ENCODE measurements at regions of chr9 and their contacts with region 1.

Region 1: DNA sequence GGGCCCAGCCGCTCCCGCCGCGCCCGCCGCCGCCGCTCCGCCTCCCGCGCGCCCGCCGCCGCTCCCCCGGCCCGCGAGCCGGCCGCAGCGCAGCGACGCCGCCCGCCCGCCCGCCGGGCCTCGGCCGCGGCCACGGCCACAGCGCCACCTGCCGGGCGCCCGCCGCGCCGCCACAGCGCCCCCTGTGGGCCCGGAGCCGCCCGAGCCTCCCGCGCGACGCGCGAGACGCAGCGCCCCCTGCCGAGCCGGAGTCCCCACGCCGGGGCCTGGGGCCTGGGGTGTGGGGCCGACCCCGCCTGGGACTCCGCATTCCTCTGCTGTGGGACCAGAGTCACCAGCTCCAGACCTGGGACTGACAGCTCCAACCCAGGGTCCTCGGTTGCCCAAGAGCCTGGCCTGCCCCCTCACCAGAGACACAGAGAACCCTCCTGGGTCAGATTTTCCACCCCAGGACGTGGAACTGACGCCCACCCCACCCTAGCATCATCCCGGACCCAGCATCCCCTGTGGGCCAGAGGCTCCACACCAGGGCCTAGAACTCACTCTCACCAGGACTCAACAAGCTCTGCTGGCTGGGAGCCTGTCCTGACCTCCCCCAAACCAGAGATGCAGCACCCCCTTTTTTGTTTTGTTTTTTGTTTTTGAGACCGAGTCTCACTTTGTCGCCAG is at the start of gene RAPGEF1:
- DNase-seq: peak; percentile 80 to 86 (median 84)
- ATAC-seq: peak; percentile 44 to 78 (median 69)
- H3K4me3 ChIP-seq: peak within 1 kb of the TSS; percentile 62 to 66 (median 63)
- H3K27ac ChIP-seq: peak within 1 kb of the TSS; percentile 87 to 99 (median 91)
- H3K4me1 ChIP-seq: peaks cover 0 to 31% (median 19%) of the 10 kb centered on the region in 4 donors
- H3K27me3 ChIP-seq: no peaks in the 10 kb centered on the region
- CTCF ChIP-seq: peak; percentile 72 to 99 (median 82)
- POLR2A ChIP-seq: no peak
- total RNA-seq, gene RAPGEF1: 22.9 to 53.6 (median 30.2) TPM

Region 2: GRCh38 chr9:131590908-131591844 is 148.9 kb before region 1 on chr9:
- intact Hi-C with region 1: loop called (anchors 2 to 5 kb)
- DNase-seq: peak; percentile 84 to 89 (median 85)
- ATAC-seq: peak; percentile 90 to 95 (median 94)
- H3K4me3 ChIP-seq: no peak overlapping the region
- H3K27ac ChIP-seq: no peak overlapping the region
- H3K4me1 ChIP-seq: no peaks in the 10 kb centered on the region
- H3K27me3 ChIP-seq: no peaks in the 10 kb centered on the region
- CTCF ChIP-seq: peak; percentile 83 to 97 (median 88)
- POLR2A ChIP-seq: no peak

Region 3: GRCh38 chr9:131656356-131657036 is 83.6 kb before region 1 on chr9:
- intact Hi-C with region 1: loop called in 1 of 2 experiments (anchors 10 kb)
- DNase-seq: peak; percentile 67 to 84 (median 74)
- ATAC-seq: peak; percentile 41 to 63 (median 45)
- H3K4me3 ChIP-seq: no peak overlapping the region
- H3K27ac ChIP-seq: peak overlapping the region; percentile 24 to 98 (median 96)
- H3K4me1 ChIP-seq: peaks cover 0 to 40% (median 17%) of the 10 kb centered on the region in 4 donors
- H3K27me3 ChIP-seq: no peaks in the 10 kb centered on the region
- CTCF ChIP-seq: no peak
- POLR2A ChIP-seq: no peak

Region 4: DNA sequence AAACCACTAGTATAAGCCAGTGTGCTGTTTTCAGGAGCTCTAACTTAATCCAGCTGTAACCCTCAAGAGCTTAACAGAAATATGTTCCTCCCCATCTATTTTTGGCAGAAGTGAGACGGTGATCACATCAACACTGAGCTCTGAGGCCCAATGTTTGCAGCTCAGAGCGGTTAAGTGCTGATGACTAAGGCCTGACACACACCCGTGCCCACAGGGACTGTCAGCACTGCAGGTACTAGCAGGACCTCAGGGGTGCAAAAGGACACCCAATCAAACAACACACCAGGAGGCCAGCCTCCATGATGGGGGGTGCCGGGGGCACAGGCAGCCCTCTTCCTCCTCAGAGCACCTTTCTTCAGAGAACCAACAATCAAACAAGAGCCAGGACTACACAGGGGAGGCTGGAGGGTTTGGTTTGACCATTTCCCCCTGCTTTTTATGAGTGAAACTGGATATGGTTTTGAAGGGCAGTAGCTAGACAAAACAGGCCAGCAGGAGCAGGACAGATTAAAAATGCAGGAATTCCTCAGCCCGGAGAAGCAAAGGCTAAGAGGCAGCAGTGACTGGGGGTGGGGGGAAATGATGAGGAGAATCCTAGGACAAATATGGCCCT is 61.5 kb before region 1 on chr9:
- intact Hi-C with region 1: loop called in 1 of 2 experiments (anchors 10 kb)
- DNase-seq: peak in 2 of 3 donors; percentile 45 to 70
- ATAC-seq: peak; percentile 56 to 88 (median 67)
- H3K4me3 ChIP-seq: no peak overlapping the region
- H3K27ac ChIP-seq: peak overlapping the region; percentile 59 to 73 (median 71)
- H3K4me1 ChIP-seq: peaks cover 0 to 47% (median 26%) of the 10 kb centered on the region in 4 donors
- H3K27me3 ChIP-seq: no peaks in the 10 kb centered on the region
- CTCF ChIP-seq: no peak
- POLR2A ChIP-seq: peak; percentile 45

Region 5: DNA sequence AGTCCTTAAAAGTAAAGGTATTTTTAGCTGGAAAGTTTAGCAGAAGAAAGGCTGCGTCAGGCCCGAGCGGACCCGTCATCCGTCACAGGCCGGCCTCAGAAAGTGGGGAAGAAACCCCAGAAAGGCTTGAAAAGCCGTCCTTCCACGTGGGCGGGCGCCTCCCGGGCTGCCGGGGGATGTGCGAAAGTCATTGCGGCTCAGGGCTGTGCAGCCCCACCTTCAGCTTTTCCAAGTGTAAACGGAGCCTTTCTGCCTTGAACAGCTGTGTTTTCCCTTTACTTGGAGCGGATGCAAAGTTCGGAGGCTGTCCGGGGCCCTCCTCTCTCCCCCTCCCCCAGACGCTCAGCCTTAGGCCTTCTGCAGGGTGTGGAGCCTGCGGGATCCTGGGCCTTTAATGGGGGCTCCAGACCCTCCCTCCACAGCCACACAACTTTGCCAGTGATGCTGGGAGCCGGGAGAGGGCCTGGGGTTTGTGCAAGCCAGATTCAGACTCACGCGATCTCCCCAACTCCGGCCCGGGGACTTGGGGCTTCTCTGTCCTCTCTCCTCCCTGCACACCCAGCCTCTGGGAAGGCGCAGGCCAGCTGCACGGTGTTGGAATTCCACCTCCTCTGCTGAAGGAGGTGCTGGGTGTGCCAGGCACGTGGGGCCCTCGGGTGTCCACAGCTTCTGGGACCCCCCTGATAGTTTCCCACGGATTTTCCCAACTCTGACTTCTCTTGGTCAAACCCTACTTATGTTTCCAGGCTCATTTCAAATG is 95.2 kb after region 1 on chr9:
- intact Hi-C with region 1: no loop called
- DNase-seq: peak in 1 of 3 donors; percentile 35
- ATAC-seq: no peak
- H3K4me3 ChIP-seq: no peak overlapping the region
- H3K27ac ChIP-seq: no peak overlapping the region
- H3K4me1 ChIP-seq: no peaks in the 10 kb centered on the region
- H3K27me3 ChIP-seq: no peaks in the 10 kb centered on the region
- CTCF ChIP-seq: no peak
- POLR2A ChIP-seq: no peak

Measured in right lobe of liver (tissue), 6 donors.